Left colon (tissue), 2 donors: ENCODE measurements at regions of chr18 and their contacts with region 1.

Region 1: GRCh38 chr18:24362758-24363157 is 34.9 kb downstream of the OSBPL1A start:
- DNase-seq: no peak
- ATAC-seq: no peak

Region 2: GRCh38 chr18:24488824-24489493 is 126.2 kb after region 1 on chr18:
- intact Hi-C with region 1: loop called in 1 of 2 experiments (anchors 5 kb)
- DNase-seq: no peak
- ATAC-seq: peak; percentile 69

Region 3: DNA sequence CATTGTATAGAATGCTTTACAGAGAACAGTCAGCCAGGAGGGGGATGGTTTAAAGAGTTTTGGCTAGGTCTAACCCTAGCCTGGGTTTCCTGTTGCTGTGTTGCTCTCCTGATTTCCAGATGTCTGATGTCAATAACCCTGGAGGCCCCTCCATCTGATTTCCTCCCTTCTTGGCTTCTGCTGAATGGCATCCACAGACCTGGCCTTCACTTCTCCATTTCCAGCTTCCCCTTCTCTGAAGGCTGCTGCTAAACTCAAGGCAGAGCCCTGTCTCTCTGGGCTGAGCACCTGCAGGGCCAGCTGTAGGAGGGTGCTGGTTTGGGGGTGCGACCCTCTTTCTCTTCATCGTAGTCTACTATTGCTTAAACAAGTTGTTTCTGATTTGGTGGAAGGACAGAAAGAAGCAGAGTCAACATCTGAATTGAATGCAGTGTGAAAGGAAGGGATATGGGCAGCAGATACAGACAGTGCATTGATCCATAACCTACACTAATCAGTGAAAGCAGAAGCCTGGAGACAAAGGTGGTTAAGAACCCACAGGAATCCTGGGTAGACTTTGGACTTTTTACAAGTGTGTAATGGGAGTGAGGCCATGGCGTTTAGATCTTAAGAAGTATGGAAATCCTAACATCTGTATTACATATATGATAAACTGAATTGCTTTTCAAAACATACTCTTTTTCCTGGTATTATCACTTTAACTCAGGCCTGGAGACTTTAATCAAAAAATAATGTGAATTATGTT is 251.3 kb after region 1 on chr18:
- intact Hi-C with region 1: no loop called
- DNase-seq: no peak
- ATAC-seq: peak; percentile 49